ENCODE measurements at regions of chr16 and their contacts with region 1.

Region 1: DNA sequence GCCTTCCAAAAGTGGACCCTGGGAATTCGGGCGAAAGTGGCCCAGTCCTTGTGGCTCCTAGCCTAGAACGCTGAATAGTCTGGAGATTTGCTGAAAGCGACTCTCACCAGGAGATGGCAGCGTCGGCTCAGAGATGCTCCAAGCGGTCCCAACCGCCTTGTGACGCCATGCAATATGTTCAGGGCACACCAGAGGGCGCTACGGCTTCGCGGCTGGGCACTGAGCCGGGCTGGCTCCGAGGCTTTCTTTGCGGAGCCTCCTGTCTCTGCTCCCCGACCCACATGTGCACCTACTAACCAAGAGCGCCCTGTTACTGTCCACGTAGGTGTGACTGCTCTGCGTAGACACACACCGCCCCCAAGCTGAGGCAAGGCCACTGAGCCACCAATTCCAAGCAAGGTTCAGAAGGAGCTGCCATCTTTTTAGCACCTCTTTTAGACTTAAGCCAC is 36.9 kb downstream of the SYCE1L start:
- DNase-seq: peak; percentile 79 to 98
- H3K4me3 ChIP-seq: no peak overlapping the region
- H3K27ac ChIP-seq: no peak overlapping the region
- H3K4me1 ChIP-seq: peaks cover 0 to 11% (median 7%) of the 10 kb centered on the region in 4 experiments; a peak in 4 of 7 replicates
- H3K27me3 ChIP-seq: no peaks in the 10 kb centered on the region; a peak in 1 of 7 replicates
- CTCF ChIP-seq: peak; percentile 99 to 100 (median 100)
- EP300 ChIP-seq: peak in 1 of 2 experiments; percentile 44; a peak in 1 of 3 replicates
- POLR2A ChIP-seq: no peak
- RAD21 ChIP-seq: peak; percentile 100

Region 2: GRCh38 chr16:77211880-77212740 is 24.0 kb before region 1 on chr16:
- CTCF ChIA-PET with region 1: no interaction called
- POLR2A ChIA-PET with region 1: no interaction called
- DNase-seq: peak; percentile 80 to 89
- H3K4me3 ChIP-seq: peak overlapping the region; percentile 53 to 84 (median 74)
- H3K27ac ChIP-seq: peak overlapping the region; percentile 71; the same call in 1 of the 2 replicates
- H3K4me1 ChIP-seq: peaks cover under 1 to 16% (median 11%) of the 10 kb centered on the region in 4 experiments
- H3K27me3 ChIP-seq: no peaks in the 10 kb centered on the region; a peak in 1 of 7 replicates
- CTCF ChIP-seq: 0 out of 4 replicates have a peak, but pooled peaks of 1 of the 3 experiments have one; percentile 2
- EP300 ChIP-seq: peak; percentile 22 to 25; a peak in 2 of 3 replicates
- POLR2A ChIP-seq: peak in 1 of 2 experiments; percentile 88
- RAD21 ChIP-seq: no peak

Region 3: DNA sequence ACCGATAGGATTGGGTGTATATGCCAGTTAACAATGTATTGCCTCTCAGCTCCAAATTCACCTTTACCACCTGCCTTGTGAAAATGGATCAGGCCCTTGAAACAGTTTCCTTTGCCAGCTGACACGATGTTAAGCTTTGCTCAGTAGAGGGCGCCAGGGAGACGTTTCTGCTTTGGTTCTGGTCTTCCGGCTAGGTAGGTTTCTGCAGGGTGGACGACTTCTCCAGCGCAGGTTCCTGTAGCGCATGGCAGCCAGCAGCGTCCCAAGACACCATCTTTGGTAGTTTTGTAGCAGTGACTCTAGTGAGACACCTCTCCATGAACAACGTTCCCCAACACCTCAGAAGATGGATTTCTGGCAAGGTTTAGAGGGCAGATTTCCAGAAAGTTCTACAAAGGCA is 12.9 kb before region 1 on chr16:
- CTCF ChIA-PET with region 1: interaction called, 10 read pairs
- POLR2A ChIA-PET with region 1: no interaction called
- DNase-seq: peak in 1 of 2 experiments; percentile 81
- H3K4me3 ChIP-seq: no peak overlapping the region
- H3K27ac ChIP-seq: no peak overlapping the region
- H3K4me1 ChIP-seq: peaks cover 0 to 5% (median 2%) of the 10 kb centered on the region in 4 experiments; a peak in 1 of 7 replicates
- H3K27me3 ChIP-seq: no peaks in the 10 kb centered on the region
- CTCF ChIP-seq: peak; percentile 68 to 95 (median 74)
- EP300 ChIP-seq: no peak
- POLR2A ChIP-seq: no peak
- RAD21 ChIP-seq: peak; percentile 38 to 51

Region 4: GRCh38 chr16:77250400-77250799 is 14.3 kb after region 1 on chr16:
- CTCF ChIA-PET with region 1: interaction called, 10 read pairs
- POLR2A ChIA-PET with region 1: no interaction called
- DNase-seq: no peak
- H3K4me3 ChIP-seq: no peak overlapping the region
- H3K27ac ChIP-seq: no peak overlapping the region
- H3K4me1 ChIP-seq: no peaks in the 10 kb centered on the region
- H3K27me3 ChIP-seq: no peaks in the 10 kb centered on the region
- CTCF ChIP-seq: no peak
- EP300 ChIP-seq: no peak
- POLR2A ChIP-seq: no peak
- RAD21 ChIP-seq: no peak

Region 5: GRCh38 chr16:77330332-77331042 is 94.4 kb after region 1 on chr16:
- CTCF ChIA-PET with region 1: no interaction called
- POLR2A ChIA-PET with region 1: no interaction called
- DNase-seq: no peak
- H3K4me3 ChIP-seq: no peak overlapping the region
- H3K27ac ChIP-seq: no peak overlapping the region
- H3K4me1 ChIP-seq: peaks cover 0 to 7% (median 4%) of the 10 kb centered on the region in 4 experiments; a peak in 2 of 7 replicates
- H3K27me3 ChIP-seq: no peaks in the 10 kb centered on the region
- CTCF ChIP-seq: no peak
- EP300 ChIP-seq: no peak
- POLR2A ChIP-seq: no peak
- RAD21 ChIP-seq: no peak

Region 6: GRCh38 chr16:77437859-77438258 is 201.8 kb after region 1 on chr16:
- CTCF ChIA-PET with region 1: interaction called, 24 read pairs
- POLR2A ChIA-PET with region 1: no interaction called
- DNase-seq: no peak
- H3K4me3 ChIP-seq: no peak overlapping the region
- H3K27ac ChIP-seq: no peak overlapping the region
- H3K4me1 ChIP-seq: peaks cover 0 to 4% (median 3%) of the 10 kb centered on the region in 4 experiments; a peak in 5 of 7 replicates
- H3K27me3 ChIP-seq: peaks cover 12 to 40% (median 33%) of the 10 kb centered on the region in 4 experiments
- CTCF ChIP-seq: peak in 2 of 3 experiments; percentile 52 to 53; a peak in 3 of 4 replicates
- EP300 ChIP-seq: no peak
- POLR2A ChIP-seq: no peak
- RAD21 ChIP-seq: peak; percentile 78 to 81